Right cardiac atrium (tissue), 5 donors: ENCODE measurements at regions of chr16 and their contacts with region 1.

Region 1: DNA sequence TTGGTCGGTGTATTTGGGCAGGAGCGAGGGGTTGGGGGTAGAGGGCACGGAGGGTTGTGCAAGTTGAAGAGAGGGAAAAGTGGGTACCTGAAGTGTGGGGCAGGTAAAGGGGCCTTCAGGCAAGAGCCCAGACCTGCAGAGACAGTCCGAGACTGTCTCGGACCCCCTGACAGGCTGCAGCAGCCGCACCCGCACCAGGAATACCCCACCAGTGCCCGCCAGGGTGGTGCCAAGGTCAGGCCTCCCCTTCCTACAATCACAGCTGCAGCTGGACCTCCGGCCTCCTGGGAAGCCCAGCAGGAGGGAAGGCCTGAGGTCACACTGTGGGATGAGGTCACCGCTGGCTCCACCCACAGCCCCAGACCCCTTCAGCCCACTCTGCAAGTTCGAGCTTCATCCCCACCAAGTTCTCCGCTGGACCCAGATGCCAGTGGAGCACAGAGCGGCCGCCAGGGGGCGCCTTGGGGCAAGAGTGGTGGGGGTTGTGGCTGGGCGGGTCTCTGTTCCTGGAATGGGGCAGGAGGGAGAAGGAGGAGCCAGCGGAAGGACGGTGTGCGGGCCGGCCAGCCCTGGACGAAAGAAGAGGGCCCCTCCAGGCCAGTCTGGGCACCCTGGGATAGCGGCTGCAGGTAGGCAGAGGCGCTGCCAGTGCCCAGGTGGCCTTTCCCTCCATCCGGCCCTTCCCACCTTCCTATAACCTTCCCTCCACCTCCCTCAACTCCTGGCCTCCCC is at the start of gene HSD3B7:
- DNase-seq: peak; percentile 92 to 97 (median 96)
- ATAC-seq: peak; percentile 87 to 88
- H3K4me3 ChIP-seq: peak within 1 kb of the TSS; percentile 26
- H3K27ac ChIP-seq: no peak within 1 kb of the TSS
- H3K4me1 ChIP-seq: peaks cover 2% of the 10 kb centered on the region
- H3K27me3 ChIP-seq: no peaks in the 10 kb centered on the region
- total RNA-seq, gene HSD3B7: 4.1 to 7.4 (median 5.6) TPM

Region 2: DNA sequence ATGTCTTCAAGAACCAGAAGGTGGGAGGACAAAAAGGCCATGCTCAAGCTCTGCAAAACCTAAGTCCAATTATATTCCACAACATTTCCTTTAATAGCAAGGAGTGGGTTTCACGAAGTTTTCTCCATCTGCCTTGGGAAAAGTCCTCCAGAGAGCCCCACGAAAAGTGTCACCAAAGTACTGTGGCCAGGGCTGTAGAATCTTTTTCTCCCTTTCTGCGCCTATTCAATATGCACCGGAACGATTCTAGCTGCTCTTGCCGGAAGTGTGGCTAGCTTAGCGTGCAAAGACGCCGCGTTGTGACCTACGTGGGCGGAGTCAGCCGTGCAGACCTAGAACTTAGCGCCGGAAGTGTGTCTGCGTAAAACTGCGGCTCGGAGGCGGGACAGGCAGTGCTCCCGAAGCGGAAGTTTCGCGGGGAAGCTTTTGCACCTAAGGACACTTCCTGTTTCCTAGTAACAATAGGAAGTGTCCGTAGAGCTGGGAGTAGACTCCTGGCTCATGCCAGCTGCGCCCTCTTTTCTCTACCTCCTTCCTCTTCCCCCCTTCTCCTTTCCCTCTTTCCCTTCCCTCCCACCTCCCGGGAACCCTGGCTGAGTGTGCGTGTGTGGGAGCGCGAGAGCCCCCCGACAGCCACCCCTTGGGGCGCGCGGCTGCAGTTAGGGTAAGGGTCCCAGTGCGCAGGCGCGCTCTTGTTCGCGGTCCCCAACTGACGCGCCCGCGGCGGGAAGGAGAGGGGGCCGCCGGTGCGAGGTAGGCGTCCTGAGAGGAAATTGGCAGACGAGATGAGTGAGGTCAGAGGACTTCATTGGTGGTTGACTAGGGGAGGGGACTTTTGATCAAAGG is 89.4 kb after region 1 on chr16 and contains the starts of genes ZNF646 and ZNF668:
- intact Hi-C with region 1: loop called in 1 of 4 experiments (anchors 10 kb)
- DNase-seq: peak; percentile 99
- ATAC-seq: peak; percentile 96
- H3K4me3 ChIP-seq: peak within 1 kb of the TSS; percentile 94
- H3K27ac ChIP-seq: peak within 1 kb of the TSS; percentile 95
- H3K4me1 ChIP-seq: peaks cover 7% of the 10 kb centered on the region
- H3K27me3 ChIP-seq: no peaks in the 10 kb centered on the region
- total RNA-seq, gene ZNF646: 7.8 to 10.3 (median 9.3) TPM
- total RNA-seq, gene ZNF668: 4.6 to 6.6 (median 4.9) TPM

Region 3: DNA sequence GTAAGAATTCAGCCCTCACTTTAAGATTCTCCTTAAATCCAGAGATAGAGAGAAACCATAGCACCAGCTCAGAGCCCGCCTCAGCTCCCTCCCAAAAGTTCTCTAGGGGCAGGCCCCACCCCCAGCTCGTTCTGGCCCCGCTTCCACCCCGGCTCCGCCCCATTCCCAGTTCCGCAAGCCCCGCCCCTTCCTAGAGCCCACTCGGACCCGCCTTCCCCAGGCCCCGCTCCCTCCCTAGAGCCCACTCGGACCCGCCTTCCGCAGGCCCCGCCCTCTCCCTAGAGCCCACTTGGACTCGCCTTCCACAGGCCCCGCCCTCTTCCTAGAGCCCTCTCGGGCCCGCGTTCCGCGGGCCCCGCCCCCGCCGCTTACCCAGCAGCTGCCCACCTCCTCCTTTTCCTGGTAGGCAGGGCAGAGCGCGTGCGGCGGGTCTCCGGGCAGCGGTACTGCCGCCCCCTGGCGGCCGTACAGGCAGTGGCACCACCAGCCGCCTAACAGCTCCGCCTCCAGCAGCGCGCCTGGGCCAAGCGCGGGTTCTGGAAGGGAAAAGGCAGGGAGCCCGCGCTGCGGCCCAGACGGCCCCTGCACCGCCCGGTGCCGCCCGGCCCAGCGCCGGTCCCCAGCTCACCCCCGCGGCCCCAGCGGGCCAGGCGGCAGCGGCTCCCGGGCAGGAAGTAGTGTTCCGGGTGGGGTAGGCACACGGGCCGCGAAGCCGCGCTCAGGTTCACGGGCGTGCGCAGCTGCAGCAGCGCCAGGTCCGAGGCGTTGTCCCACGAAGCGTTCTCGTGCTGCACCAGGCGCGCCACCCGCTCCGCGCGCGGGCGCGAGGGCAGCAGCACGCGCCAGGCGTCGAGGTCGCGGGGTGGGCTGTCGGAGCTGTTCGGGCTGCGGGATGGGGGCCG is 157.5 kb after region 1 on chr16:
- intact Hi-C with region 1: loop called in 1 of 4 experiments (anchors 10 kb)
- DNase-seq: peak; percentile 99 to 100 (median 99)
- ATAC-seq: peak; percentile 96 to 97
- H3K4me3 ChIP-seq: peak overlapping the region; percentile 26
- H3K27ac ChIP-seq: peak overlapping the region; percentile 43
- H3K4me1 ChIP-seq: peaks cover 11% of the 10 kb centered on the region
- H3K27me3 ChIP-seq: no peaks in the 10 kb centered on the region

Region 4: GRCh38 chr16:31333686-31334649 is 349.1 kb after region 1 on chr16:
- intact Hi-C with region 1: loop called in 1 of 4 experiments (anchors 10 kb)
- DNase-seq: peak in 1 of 3 donors; percentile 42
- ATAC-seq: peak; percentile 66 to 69
- H3K4me3 ChIP-seq: no peak overlapping the region
- H3K27ac ChIP-seq: no peak overlapping the region
- H3K4me1 ChIP-seq: no peaks in the 10 kb centered on the region
- H3K27me3 ChIP-seq: no peaks in the 10 kb centered on the region

Region 5: DNA sequence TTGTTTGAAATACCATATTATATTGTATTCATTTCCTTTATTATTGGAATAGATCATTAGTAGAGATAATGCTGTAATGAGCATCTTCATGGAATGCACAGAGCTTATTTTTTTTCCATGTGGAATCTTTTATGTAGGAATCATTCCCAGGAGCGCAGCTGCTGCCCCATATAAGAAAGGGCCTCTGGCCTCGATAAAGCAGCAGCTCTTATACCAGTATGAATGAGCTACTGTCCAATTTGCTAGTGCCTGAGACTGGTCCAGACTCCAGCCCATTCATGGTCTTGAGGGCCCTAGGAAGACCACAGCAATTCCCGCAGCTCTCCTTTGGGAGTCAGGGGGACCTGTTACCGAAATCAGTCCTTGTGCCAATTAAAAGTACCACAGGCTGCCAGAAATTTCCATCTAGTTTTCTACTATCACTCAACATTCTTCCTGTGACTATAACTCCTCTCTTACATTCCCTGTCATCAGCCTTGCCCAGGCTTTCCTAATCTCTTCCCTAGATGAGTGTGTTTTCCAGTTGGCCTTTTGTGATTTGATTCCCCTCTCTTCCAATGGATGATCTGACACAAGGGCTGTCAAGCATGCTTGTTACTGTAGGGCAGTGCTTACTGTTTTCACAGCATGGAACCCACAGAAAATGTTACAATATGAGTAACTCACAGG is 455.8 kb after region 1 on chr16:
- intact Hi-C with region 1: loop called in 2 of 4 experiments (anchors 5 kb)
- DNase-seq: no peak
- ATAC-seq: no peak
- H3K4me3 ChIP-seq: no peak overlapping the region
- H3K27ac ChIP-seq: peak overlapping the region; percentile 20
- H3K4me1 ChIP-seq: no peaks in the 10 kb centered on the region
- H3K27me3 ChIP-seq: no peaks in the 10 kb centered on the region

Region 6: GRCh38 chr16:31458844-31459721 is 474.2 kb after region 1 on chr16 and contains the start of gene ARMC5:
- intact Hi-C with region 1: loop called in 1 of 4 experiments (anchors 10 kb)
- DNase-seq: peak; percentile 98 to 99 (median 99)
- ATAC-seq: peak; percentile 89 to 92
- H3K4me3 ChIP-seq: peak within 1 kb of the TSS; percentile 58
- H3K27ac ChIP-seq: peak within 1 kb of the TSS; percentile 90
- H3K4me1 ChIP-seq: peaks cover 6% of the 10 kb centered on the region
- H3K27me3 ChIP-seq: no peaks in the 10 kb centered on the region
- total RNA-seq, gene ARMC5: 6.8 to 9.0 (median 7.7) TPM

Region 7: GRCh38 chr16:31868691-31869167 is 883.9 kb after region 1 on chr16:
- intact Hi-C with region 1: loop called in 3 of 4 experiments (anchors 5 to 10 kb)
- DNase-seq: peak; percentile 76 to 93 (median 85)
- ATAC-seq: peak; percentile 66 to 70
- H3K4me3 ChIP-seq: no peak overlapping the region
- H3K27ac ChIP-seq: no peak overlapping the region
- H3K4me1 ChIP-seq: no peaks in the 10 kb centered on the region
- H3K27me3 ChIP-seq: no peaks in the 10 kb centered on the region